Activated T-helper 2 cell treated with anti-CD3 and anti-CD28 coated beads, Interferon-gamma antibody, Interleukin-2, Interleukin-4, amounts not matched to agents 10 μg/mL and 5 μg/mL and 100 μg/mL, durations not matched to agents 14 hours and 24 hours and 36 hours (primary cell): ENCODE measurements at regions of chr16 and their contacts with region 1.

Region 1: GRCh38 chr16:52191531-52192134 is 355.3 kb downstream of the TOX3 start:
- DNase-seq: peak; percentile 14
- H3K4me3 Mint-ChIP-seq: no peak overlapping the region
- H3K27ac Mint-ChIP-seq: no peak overlapping the region
- H3K4me1 Mint-ChIP-seq: no peaks in the 10 kb centered on the region
- H3K27me3 Mint-ChIP-seq: no peaks in the 10 kb centered on the region

Region 2: GRCh38 chr16:52123061-52123843 is 68.4 kb before region 1 on chr16:
- intact Hi-C with region 1: no loop called
- DNase-seq: no peak
- H3K4me3 Mint-ChIP-seq: no peak overlapping the region
- H3K27ac Mint-ChIP-seq: no peak overlapping the region
- H3K4me1 Mint-ChIP-seq: no peaks in the 10 kb centered on the region
- H3K27me3 Mint-ChIP-seq: no peaks in the 10 kb centered on the region

Region 3: GRCh38 chr16:52912565-52913173 is 721.0 kb after region 1 on chr16:
- intact Hi-C with region 1: loop called (anchors 5 kb)
- DNase-seq: no peak
- H3K4me3 Mint-ChIP-seq: no peak overlapping the region
- H3K27ac Mint-ChIP-seq: no peak overlapping the region
- H3K4me1 Mint-ChIP-seq: no peaks in the 10 kb centered on the region
- H3K27me3 Mint-ChIP-seq: no peaks in the 10 kb centered on the region

Region 4: DNA sequence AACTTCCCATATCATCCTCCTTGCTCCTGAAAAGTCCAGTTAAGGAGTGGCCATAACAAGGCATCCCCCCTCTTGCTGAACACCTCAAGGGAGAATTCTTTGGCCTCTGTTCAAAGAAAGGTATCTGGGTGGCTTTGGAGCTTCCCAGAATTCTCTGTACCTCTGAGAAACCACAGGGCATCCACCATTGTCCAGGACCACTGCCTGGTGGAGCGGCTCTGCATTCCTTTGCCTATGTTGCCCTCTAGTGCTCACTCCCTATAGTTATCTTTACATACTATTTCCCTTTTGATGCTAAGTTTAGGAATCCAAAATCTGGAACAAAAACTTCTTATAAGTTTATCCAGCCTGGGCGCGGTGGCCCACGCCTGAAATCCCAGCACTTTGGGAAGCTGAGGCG is 830.7 kb after region 1 on chr16:
- intact Hi-C with region 1: loop called (anchors 2 kb)
- DNase-seq: no peak
- H3K4me3 Mint-ChIP-seq: no peak overlapping the region
- H3K27ac Mint-ChIP-seq: no peak overlapping the region
- H3K4me1 Mint-ChIP-seq: peaks cover 3% of the 10 kb centered on the region
- H3K27me3 Mint-ChIP-seq: peaks cover 3% of the 10 kb centered on the region